ENCODE measurements at regions of chr12 and their contacts with region 1.

Region 1: DNA sequence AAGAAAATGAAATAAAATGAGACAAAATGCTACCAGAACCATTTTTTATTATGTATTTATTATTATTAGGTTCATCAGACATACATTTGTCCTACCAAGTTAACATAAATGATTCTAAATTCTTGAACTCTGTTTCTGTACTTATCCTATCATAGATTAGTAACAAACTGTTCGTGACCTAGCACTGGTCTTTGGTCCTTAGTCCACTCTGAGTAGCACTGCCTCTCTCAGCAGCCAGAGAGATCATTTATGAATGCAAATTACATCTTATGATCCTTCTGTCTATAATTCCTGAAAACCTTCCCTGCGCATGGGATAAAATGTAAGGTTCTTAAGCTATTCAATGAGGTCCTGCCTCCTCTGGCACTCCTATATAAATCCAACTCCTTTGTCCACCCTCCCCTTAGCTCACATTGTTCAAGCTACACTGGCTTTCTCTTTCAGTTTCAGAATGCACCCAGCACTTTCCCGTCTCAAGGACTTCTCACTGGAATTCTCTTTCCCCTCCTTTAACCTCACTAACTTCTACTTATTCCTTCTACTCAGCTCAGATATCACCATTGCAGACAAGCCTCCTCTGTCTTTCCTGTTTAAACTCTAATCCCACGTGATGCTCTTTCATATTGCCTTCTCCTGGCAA is 17.1 kb downstream of the PDZRN4 start:
- DNase-seq: no peak
- ATAC-seq: no peak
- H3K4me3 ChIP-seq: peak overlapping the region; percentile 14; the same call in 1 of the 2 replicates
- H3K27ac ChIP-seq: no peak overlapping the region
- H3K4me1 ChIP-seq: no peaks in the 10 kb centered on the region
- H3K27me3 ChIP-seq: no peaks in the 10 kb centered on the region
- CTCF ChIP-seq: no peak
- POLR2A ChIP-seq: no peak
- RAD21 ChIP-seq: no peak

Region 2: DNA sequence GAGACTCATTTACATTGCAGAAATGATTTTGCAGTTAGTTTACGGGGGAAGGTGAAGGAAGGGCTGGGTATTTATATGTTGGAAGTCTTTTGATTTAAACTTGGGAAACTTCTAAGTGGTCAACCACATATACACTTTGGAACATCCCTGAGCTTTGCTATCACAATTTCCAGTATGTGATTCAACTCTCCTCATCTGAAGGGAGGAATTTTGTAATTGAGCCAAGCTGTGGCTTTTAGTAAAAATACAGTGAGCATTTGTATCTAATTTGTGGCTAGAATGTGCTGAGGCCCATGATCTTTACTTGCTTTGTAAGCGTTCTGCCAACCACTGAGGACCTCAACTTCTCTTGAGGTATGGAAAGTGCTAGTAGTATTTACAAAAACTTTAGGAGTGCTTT is 252.1 kb before region 1 on chr12:
- CTCF ChIA-PET with region 1: no interaction called
- POLR2A ChIA-PET with region 1: no interaction called
- dilution Hi-C with region 1: no loop called
- in situ Hi-C with region 1: no loop called
- intact Hi-C with region 1: loop called (anchors 10 kb)
- DNase-seq: peak; percentile 46
- ATAC-seq: no peak
- H3K4me3 ChIP-seq: no peak overlapping the region
- H3K27ac ChIP-seq: no peak overlapping the region
- H3K4me1 ChIP-seq: no peaks in the 10 kb centered on the region
- H3K27me3 ChIP-seq: no peaks in the 10 kb centered on the region
- CTCF ChIP-seq: no peak
- POLR2A ChIP-seq: no peak
- RAD21 ChIP-seq: no peak

Region 3: DNA sequence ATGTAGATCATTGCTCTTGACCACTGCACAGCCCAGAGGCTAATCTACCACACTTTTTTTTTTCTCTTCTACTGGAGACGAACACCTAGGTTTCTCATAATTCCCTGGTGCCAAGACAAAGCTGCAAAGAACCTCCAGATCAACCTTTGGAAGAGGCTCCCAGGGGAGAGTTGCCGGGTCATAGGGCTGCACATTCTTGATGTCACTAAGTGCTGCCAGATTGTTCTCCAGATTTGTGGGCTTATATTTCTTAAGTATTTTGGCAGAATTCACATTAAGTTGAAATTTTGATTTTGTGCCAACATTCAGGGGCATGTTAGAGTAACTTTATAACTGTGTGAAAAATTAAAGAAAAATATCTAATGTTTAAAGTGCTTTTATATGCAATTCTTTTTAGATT is 30.6 kb before region 1 on chr12:
- CTCF ChIA-PET with region 1: no interaction called
- POLR2A ChIA-PET with region 1: no interaction called
- dilution Hi-C with region 1: no loop called
- in situ Hi-C with region 1: no loop called
- intact Hi-C with region 1: loop called (anchors 1 kb)
- DNase-seq: no peak
- ATAC-seq: no peak
- H3K4me3 ChIP-seq: no peak overlapping the region
- H3K27ac ChIP-seq: no peak overlapping the region
- H3K4me1 ChIP-seq: no peaks in the 10 kb centered on the region
- H3K27me3 ChIP-seq: no peaks in the 10 kb centered on the region
- CTCF ChIP-seq: no peak
- POLR2A ChIP-seq: no peak
- RAD21 ChIP-seq: no peak

Region 4: GRCh38 chr12:41220931-41221330 is 15.7 kb after region 1 on chr12:
- CTCF ChIA-PET with region 1: no interaction called
- POLR2A ChIA-PET with region 1: no interaction called
- dilution Hi-C with region 1: no loop called
- in situ Hi-C with region 1: no loop called
- intact Hi-C with region 1: no loop called
- DNase-seq: no peak
- ATAC-seq: no peak
- H3K4me3 ChIP-seq: no peak overlapping the region
- H3K27ac ChIP-seq: no peak overlapping the region
- H3K4me1 ChIP-seq: no peaks in the 10 kb centered on the region
- H3K27me3 ChIP-seq: no peaks in the 10 kb centered on the region
- CTCF ChIP-seq: no peak
- POLR2A ChIP-seq: no peak
- RAD21 ChIP-seq: no peak

Measured in IMR-90 (cell line).